Vagina (tissue), 2 donors: ENCODE measurements at regions of chr21 and their contacts with region 1.

Region 1: GRCh38 chr21:31592963-31593560 is 66.4 kb upstream of the SOD1 start:
- DNase-seq: no peak
- H3K4me3 ChIP-seq: no peak overlapping the region
- H3K27ac ChIP-seq: no peak overlapping the region
- H3K4me1 ChIP-seq: no peaks in the 10 kb centered on the region
- H3K27me3 ChIP-seq: no peaks in the 10 kb centered on the region
- CTCF ChIP-seq: no peak
- POLR2A ChIP-seq: no peak

Region 2: GRCh38 chr21:31098576-31099005 is 494.5 kb before region 1 on chr21:
- intact Hi-C with region 1: loop called (anchors 10 kb)
- DNase-seq: no peak
- H3K4me3 ChIP-seq: no peak overlapping the region
- H3K27ac ChIP-seq: no peak overlapping the region
- H3K4me1 ChIP-seq: no peaks in the 10 kb centered on the region
- H3K27me3 ChIP-seq: no peaks in the 10 kb centered on the region
- CTCF ChIP-seq: peak; percentile 29 to 65 (median 63)
- POLR2A ChIP-seq: no peak